ENCODE measurements at regions of chr20 and their contacts with region 1.

Region 1: DNA sequence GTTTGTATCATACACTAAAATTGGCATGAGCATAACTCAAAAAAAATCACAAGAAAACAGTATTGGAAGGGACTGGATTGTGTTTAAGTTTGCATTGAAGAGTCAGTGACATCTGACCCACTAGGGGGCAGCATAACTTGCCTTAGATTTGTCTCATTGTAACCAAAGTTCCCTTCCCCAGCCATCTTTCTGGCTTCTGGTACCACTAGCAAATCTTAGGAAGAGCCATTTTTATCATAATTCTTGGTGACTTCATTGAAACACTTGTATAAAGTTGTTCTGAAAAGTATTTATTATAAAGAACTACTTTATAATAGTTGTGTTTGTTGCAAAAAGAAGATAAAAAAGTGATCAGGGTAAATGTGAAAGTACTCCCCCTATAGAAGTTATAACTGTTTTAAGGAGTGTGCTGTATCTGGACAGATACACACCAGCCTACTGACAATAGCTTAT is 7.7 kb downstream of the CSTF1 start:
- DNase-seq: peak; percentile 66
- H3K4me3 Mint-ChIP-seq: no peak overlapping the region
- H3K27ac Mint-ChIP-seq: no peak overlapping the region
- H3K4me1 Mint-ChIP-seq: peaks cover 3% of the 10 kb centered on the region
- H3K27me3 Mint-ChIP-seq: no peaks in the 10 kb centered on the region
- CTCF ChIP-seq: peak; percentile 48

Region 2: GRCh38 chr20:56468316-56469082 is 68.4 kb after region 1 on chr20 and contains the start of gene RTF2:
- CTCF ChIA-PET with region 1: no interaction called
- intact Hi-C with region 1: loop called (anchors 5 kb)
- DNase-seq: peak; percentile 95
- H3K4me3 Mint-ChIP-seq: peak within 1 kb of the TSS; percentile 97
- H3K27ac Mint-ChIP-seq: peak within 1 kb of the TSS; percentile 98
- H3K4me1 Mint-ChIP-seq: peaks cover 12% of the 10 kb centered on the region
- H3K27me3 Mint-ChIP-seq: no peaks in the 10 kb centered on the region
- CTCF ChIP-seq: no peak
- total RNA-seq, gene RTF2: 67.2 and 68.7 TPM in 2 replicates

Measured in Calu3 (cell line).